ENCODE measurements at regions of chr1 and their contacts with region 1.

Region 1: DNA sequence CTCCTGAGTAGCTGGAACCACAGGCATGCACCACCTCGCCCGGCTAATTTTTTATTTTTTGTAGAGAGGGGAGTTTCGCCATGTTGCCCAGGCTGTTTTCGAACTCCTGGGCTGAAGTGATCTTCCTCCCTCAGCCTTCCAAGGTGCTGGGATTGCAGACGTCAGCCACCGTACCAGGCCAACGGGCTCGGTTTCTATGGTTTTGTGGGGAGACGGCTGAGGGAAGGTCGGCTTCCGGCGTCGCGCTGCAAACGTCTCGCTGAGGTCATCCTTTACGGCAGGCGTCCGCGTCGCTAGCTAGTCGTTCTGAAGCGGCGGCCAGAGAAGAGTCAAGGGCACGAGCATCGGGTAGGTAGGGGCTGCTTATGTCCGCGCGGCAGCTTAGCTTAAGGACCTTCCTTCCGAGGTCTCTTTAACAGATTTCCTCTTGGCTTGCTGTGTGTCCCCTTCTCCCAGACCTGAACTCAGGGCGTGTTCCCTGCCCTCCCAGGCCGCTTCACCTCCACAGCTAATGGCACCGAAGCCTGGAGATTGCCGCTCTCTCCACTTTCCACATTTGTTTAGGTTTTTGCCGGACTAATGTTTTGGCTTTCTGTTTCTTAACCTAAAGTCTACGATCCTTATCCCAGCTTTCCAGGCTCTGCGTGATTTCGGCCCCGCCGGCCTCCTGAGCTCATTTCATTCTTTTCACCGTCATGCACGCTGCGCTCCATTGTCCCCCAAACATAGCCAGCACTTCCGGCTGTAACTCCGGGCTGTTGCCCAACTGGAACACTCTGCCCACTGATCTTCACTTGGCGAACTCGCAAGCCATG is at the start of gene NDUFS5:
- DNase-seq: peak; percentile 90
- H3K4me3 Mint-ChIP-seq: peak within 1 kb of the TSS; percentile 78
- H3K27ac Mint-ChIP-seq: peak within 1 kb of the TSS; percentile 94
- H3K4me1 Mint-ChIP-seq: peaks cover 11% of the 10 kb centered on the region
- H3K27me3 Mint-ChIP-seq: no peaks in the 10 kb centered on the region
- CTCF ChIP-seq: no peak
- total RNA-seq, gene NDUFS5: 224 and 233 TPM in 2 replicates

Region 2: GRCh38 chr1:38859561-38860453 is 166.5 kb before region 1 on chr1 and contains the start of gene RRAGC:
- CTCF ChIA-PET with region 1: no interaction called
- POLR2A ChIA-PET with region 1: interaction called, 39 read pairs
- intact Hi-C with region 1: loop called (anchors 1 kb)
- DNase-seq: peak; percentile 99
- H3K4me3 Mint-ChIP-seq: peak within 1 kb of the TSS; percentile 93
- H3K27ac Mint-ChIP-seq: peak within 1 kb of the TSS; percentile 81
- H3K4me1 Mint-ChIP-seq: peaks cover 21% of the 10 kb centered on the region
- H3K27me3 Mint-ChIP-seq: no peaks in the 10 kb centered on the region
- CTCF ChIP-seq: no peak
- total RNA-seq, gene RRAGC: 23.3 and 40.6 TPM in 2 replicates

Region 3: DNA sequence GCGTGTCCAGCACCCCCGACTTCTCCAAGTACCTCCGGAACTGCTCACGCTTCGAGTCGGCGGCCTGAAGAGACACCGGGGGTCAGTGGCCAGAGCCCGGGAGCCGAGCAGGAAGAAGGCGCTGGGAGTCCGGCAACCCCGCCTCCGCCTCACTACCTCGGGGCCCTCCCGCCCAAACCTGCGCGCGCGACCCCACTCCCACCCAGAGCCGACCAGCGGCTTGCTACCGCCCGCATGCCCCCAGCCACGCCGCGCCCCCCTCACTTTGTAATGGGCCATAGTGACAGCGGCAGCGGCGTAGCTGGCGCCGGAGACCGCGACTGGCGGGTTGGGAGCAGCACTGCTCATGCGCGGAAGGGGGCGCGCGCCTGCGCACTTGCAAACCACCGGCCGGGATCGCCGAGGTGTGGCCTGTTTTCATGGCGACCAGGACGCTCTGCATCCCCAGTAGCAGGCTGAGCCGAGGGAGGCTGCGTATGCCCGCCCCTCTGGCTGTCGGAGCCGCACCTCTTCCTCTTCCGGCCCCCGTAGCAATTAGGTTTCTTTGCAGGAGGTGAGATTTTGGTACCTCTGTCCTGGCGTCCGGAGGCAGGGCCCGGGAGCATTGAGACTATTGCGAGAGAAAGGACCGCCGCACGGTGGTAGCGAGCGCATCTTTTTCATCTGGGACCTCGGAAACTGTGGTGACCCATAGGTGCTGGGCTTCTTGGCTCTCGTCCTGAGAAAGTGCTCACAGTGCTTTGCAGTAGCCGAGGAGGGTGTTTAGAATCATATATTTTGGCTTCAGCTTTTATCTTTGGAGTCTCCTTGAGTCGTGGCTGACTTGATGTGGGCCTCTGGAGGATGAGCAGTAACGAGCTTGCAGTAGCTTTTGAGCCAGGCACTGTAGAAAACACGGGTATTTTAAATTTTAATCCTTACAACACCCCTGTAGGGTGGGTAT is 153.0 kb before region 1 on chr1 and contains the start of gene MYCBP:
- CTCF ChIA-PET with region 1: no interaction called
- POLR2A ChIA-PET with region 1: interaction called, 40 read pairs
- intact Hi-C with region 1: loop called (anchors 1 kb)
- DNase-seq: peak; percentile 96
- H3K4me3 Mint-ChIP-seq: peak within 1 kb of the TSS; percentile 83
- H3K27ac Mint-ChIP-seq: peak within 1 kb of the TSS; percentile 17
- H3K4me1 Mint-ChIP-seq: peaks cover 19% of the 10 kb centered on the region
- H3K27me3 Mint-ChIP-seq: no peaks in the 10 kb centered on the region
- CTCF ChIP-seq: no peak
- total RNA-seq, gene MYCBP: 16.1 and 18.9 TPM in 2 replicates

Region 4: DNA sequence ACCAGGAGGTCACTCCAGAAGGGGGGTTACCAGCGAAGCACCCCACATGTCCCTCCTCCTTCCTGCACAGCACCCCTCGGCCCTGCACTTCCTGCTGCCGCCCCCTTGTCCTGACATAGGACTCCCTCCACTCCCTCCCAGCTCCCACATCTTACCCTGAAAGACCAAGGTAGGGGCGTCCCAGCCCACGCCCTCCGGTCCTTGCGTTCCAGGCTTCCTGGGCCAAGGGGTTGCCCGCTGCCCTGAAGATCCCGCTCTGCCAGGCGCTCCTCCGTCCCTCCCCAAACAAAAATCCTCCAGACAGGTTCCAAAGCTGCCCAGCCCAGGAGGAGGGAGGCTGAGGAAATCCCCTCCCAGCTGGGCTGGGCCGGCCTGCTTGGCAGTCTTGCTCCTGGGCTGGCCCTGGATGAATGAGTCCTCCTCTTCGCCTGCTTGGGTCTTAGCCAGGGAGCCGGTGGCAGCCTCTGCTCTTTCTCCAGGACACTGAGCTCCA is 84.7 kb before region 1 on chr1 and contains the start of gene RHBDL2:
- CTCF ChIA-PET with region 1: no interaction called
- POLR2A ChIA-PET with region 1: interaction called, 8 read pairs
- intact Hi-C with region 1: loop called (anchors 5 kb)
- DNase-seq: peak; percentile 84
- H3K4me3 Mint-ChIP-seq: peak within 1 kb of the TSS; percentile 91
- H3K27ac Mint-ChIP-seq: peak within 1 kb of the TSS; percentile 60
- H3K4me1 Mint-ChIP-seq: peaks cover 15% of the 10 kb centered on the region
- H3K27me3 Mint-ChIP-seq: no peaks in the 10 kb centered on the region
- CTCF ChIP-seq: no peak
- total RNA-seq, gene RHBDL2: 0.30 and 0.52 TPM in 2 replicates

Region 5: GRCh38 chr1:38990738-38991639 is 35.3 kb before region 1 on chr1 and contains the start of gene AKIRIN1:
- CTCF ChIA-PET with region 1: interaction called, 3 read pairs
- POLR2A ChIA-PET with region 1: interaction called, 19 read pairs
- intact Hi-C with region 1: loop called (anchors 1 kb)
- DNase-seq: peak; percentile 92
- H3K4me3 Mint-ChIP-seq: peak within 1 kb of the TSS; percentile 79
- H3K27ac Mint-ChIP-seq: peak within 1 kb of the TSS; percentile 76
- H3K4me1 Mint-ChIP-seq: peaks cover 21% of the 10 kb centered on the region
- H3K27me3 Mint-ChIP-seq: no peaks in the 10 kb centered on the region
- CTCF ChIP-seq: no peak
- total RNA-seq, gene AKIRIN1: 59.0 and 63.7 TPM in 2 replicates

Region 6: DNA sequence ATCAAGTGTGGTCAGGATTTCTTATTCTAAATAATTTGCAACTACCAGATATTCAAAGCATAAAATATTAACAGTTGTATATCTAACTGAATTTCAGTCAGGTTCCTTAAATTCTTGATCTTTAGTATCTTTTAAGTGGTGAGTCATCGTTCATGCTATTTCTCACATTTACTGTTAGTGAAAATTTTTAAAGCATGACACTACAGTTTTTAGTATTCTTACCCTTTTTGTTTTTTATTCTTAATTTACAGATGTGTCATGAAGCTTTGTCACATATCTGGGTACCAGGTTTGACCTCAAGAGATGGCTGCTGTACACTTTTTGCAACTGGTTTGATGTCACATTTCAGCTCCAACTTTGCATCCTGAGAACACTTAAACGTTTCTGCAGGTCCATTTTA is 22.5 kb before region 1 on chr1:
- CTCF ChIA-PET with region 1: no interaction called
- POLR2A ChIA-PET with region 1: interaction called, 20 read pairs
- intact Hi-C with region 1: no loop called
- DNase-seq: no peak
- H3K4me3 Mint-ChIP-seq: no peak overlapping the region
- H3K27ac Mint-ChIP-seq: peak overlapping the region; percentile 16
- H3K4me1 Mint-ChIP-seq: peaks cover 6% of the 10 kb centered on the region
- H3K27me3 Mint-ChIP-seq: no peaks in the 10 kb centered on the region
- CTCF ChIP-seq: no peak

Region 7: GRCh38 chr1:39043513-39043912 is 17.3 kb after region 1 on chr1:
- CTCF ChIA-PET with region 1: no interaction called
- POLR2A ChIA-PET with region 1: interaction called, 15 read pairs
- intact Hi-C with region 1: no loop called
- DNase-seq: no peak
- H3K4me3 Mint-ChIP-seq: no peak overlapping the region
- H3K27ac Mint-ChIP-seq: no peak overlapping the region
- H3K4me1 Mint-ChIP-seq: peaks cover 7% of the 10 kb centered on the region
- H3K27me3 Mint-ChIP-seq: no peaks in the 10 kb centered on the region
- CTCF ChIP-seq: no peak

Measured in MCF 10A (cell line).